ENCODE measurements at regions of chr2 and their contacts with region 1.

Region 1: GRCh38 chr2:136378712-136379595 is 261.0 kb upstream of the CXCR4 start:
- DNase-seq: peak; percentile 61 to 67
- H3K4me3 ChIP-seq: no peak overlapping the region
- H3K4me3 Mint-ChIP-seq: no peak overlapping the region
- H3K27ac Mint-ChIP-seq: no peak overlapping the region
- H3K4me1 ChIP-seq: no peaks in the 10 kb centered on the region
- H3K4me1 Mint-ChIP-seq: no peaks in the 10 kb centered on the region
- H3K27me3 ChIP-seq: no peaks in the 10 kb centered on the region
- H3K27me3 Mint-ChIP-seq: peaks cover 4% of the 10 kb centered on the region
- CTCF ChIP-seq: peak; percentile 76 to 86

Region 2: GRCh38 chr2:135913727-135914365 is 465.1 kb before region 1 on chr2:
- CTCF ChIA-PET with region 1: interaction called, 8 read pairs
- POLR2A ChIA-PET with region 1: no interaction called
- intact Hi-C with region 1: loop called (anchors 1 kb)
- DNase-seq: peak in 1 of 2 experiments; percentile 55
- H3K4me3 ChIP-seq: no peak overlapping the region
- H3K4me3 Mint-ChIP-seq: no peak overlapping the region
- H3K27ac Mint-ChIP-seq: no peak overlapping the region
- H3K4me1 ChIP-seq: no peaks in the 10 kb centered on the region
- H3K4me1 Mint-ChIP-seq: no peaks in the 10 kb centered on the region
- H3K27me3 ChIP-seq: no peaks in the 10 kb centered on the region
- H3K27me3 Mint-ChIP-seq: no peaks in the 10 kb centered on the region
- CTCF ChIP-seq: peak; percentile 69 to 75

Region 3: GRCh38 chr2:135997380-135997779 is 381.6 kb before region 1 on chr2:
- CTCF ChIA-PET with region 1: no interaction called
- POLR2A ChIA-PET with region 1: no interaction called
- intact Hi-C with region 1: loop called (anchors 5 kb)
- DNase-seq: peak; percentile 39 to 55
- H3K4me3 ChIP-seq: no peak overlapping the region
- H3K4me3 Mint-ChIP-seq: no peak overlapping the region
- H3K27ac Mint-ChIP-seq: no peak overlapping the region
- H3K4me1 ChIP-seq: no peaks in the 10 kb centered on the region
- H3K4me1 Mint-ChIP-seq: no peaks in the 10 kb centered on the region
- H3K27me3 ChIP-seq: no peaks in the 10 kb centered on the region
- H3K27me3 Mint-ChIP-seq: no peaks in the 10 kb centered on the region
- CTCF ChIP-seq: peak in 1 of 2 experiments; percentile 57

Region 4: GRCh38 chr2:136117909-136118818 is 260.8 kb before region 1 on chr2 and contains the start of gene CXCR4:
- CTCF ChIA-PET with region 1: no interaction called
- POLR2A ChIA-PET with region 1: no interaction called
- intact Hi-C with region 1: loop called (anchors 2 kb)
- DNase-seq: peak; percentile 67
- H3K4me3 ChIP-seq: peak within 1 kb of the TSS; percentile 55
- H3K4me3 Mint-ChIP-seq: peak within 1 kb of the TSS; percentile 89
- H3K27ac Mint-ChIP-seq: no peak within 1 kb of the TSS
- H3K4me1 ChIP-seq: peaks cover 3% of the 10 kb centered on the region; the same call in 1 of the 2 replicates
- H3K4me1 Mint-ChIP-seq: no peaks in the 10 kb centered on the region
- H3K27me3 ChIP-seq: peaks cover 8% of the 10 kb centered on the region
- H3K27me3 Mint-ChIP-seq: peaks cover 32% of the 10 kb centered on the region
- CTCF ChIP-seq: peak in 1 of 2 experiments; percentile 22
- total RNA-seq, gene CXCR4: 1.00 and 1.4 TPM in 2 replicates

Region 5: DNA sequence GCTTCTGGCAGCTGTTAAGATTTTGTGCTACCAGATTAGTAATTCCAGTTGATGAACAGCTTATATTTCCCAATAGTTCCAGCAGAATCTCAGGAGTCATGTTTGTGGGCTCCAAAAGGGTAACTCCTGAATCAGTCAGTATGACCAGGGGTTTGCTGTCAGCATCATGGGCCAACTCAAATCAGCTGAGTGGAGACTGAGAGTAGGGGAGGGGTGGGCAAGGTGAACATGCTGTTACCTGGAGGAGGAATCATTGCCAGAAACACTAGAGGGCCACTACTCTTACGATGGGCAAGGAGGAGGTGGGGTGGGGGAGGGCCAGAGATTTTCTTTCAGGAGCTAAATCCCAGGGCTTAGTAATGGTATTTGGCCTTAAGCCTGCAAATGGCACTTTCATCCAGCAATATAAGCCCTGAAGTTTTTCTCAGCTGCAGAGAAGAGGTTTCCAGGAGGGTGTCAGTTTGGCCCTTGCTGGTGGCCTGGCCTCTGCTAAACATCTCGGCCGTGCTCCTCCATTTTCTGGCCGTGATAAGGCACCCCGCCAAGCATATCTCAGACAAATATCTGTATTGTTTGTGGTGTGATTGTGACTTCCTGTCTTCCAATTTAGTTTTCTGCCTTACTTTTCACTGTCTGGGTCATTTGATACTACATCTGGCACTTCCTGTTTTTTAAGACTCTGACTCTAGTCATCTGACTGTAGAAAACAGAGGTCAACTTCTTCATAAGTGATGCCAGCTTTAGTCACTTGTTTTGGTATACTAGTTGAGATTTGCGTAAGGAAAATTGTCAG is 140.5 kb before region 1 on chr2:
- CTCF ChIA-PET with region 1: no interaction called
- POLR2A ChIA-PET with region 1: no interaction called
- intact Hi-C with region 1: loop called (anchors 5 kb)
- DNase-seq: no peak
- H3K4me3 ChIP-seq: no peak overlapping the region
- H3K4me3 Mint-ChIP-seq: no peak overlapping the region
- H3K27ac Mint-ChIP-seq: no peak overlapping the region
- H3K4me1 ChIP-seq: no peaks in the 10 kb centered on the region
- H3K4me1 Mint-ChIP-seq: no peaks in the 10 kb centered on the region
- H3K27me3 ChIP-seq: no peaks in the 10 kb centered on the region
- H3K27me3 Mint-ChIP-seq: no peaks in the 10 kb centered on the region
- CTCF ChIP-seq: no peak